ENCODE measurements at regions of chr4 and their contacts with region 1.

Region 1: DNA sequence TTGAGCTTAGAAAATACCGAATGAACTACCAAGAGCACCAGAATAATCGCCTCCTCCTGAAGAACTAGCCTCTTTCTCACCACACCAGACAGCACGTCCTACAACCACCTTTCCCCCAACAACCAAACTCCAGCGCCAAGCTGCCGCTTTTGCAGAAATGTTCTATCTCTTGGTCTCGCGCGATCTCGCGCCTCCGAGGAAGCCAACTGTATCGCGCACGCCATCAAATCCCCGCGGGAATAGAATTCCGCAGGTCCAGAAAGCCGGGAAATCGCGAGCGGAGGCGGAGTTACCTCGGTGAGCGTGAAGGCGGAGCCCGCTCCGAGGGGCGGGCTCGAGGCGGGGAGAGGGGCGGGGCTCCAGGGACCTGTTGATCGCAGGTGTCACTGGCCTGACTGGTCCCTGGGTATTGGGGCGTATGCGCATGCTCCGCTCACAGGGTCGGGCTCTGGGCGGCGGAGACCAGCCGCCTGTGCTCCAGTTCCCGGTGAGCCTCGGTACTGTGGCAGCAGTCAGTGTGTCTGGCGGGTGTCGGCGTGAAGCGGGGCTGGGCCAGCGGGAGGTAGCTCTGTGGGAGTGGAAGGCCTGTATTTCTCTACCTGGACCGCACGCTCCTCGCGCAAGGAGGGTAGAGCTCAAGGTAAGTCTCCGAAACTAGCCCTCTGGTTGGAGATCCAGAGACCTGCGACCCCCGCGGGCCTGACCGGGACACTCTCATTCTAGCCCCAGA is at the start of gene USP53:
- DNase-seq: peak; percentile 97
- ATAC-seq: peak; percentile 97
- total RNA-seq, gene USP53: 32.8 TPM

Region 2: GRCh38 chr4:119099227-119099801 is 113.1 kb before region 1 on chr4:
- intact Hi-C with region 1: loop called (anchors 5 kb)
- DNase-seq: no peak
- ATAC-seq: peak; percentile 43

Region 3: GRCh38 chr4:119179011-119179410 is 33.4 kb before region 1 on chr4:
- intact Hi-C with region 1: loop called (anchors 5 kb)
- DNase-seq: no peak
- ATAC-seq: peak; percentile 46

Region 4: DNA sequence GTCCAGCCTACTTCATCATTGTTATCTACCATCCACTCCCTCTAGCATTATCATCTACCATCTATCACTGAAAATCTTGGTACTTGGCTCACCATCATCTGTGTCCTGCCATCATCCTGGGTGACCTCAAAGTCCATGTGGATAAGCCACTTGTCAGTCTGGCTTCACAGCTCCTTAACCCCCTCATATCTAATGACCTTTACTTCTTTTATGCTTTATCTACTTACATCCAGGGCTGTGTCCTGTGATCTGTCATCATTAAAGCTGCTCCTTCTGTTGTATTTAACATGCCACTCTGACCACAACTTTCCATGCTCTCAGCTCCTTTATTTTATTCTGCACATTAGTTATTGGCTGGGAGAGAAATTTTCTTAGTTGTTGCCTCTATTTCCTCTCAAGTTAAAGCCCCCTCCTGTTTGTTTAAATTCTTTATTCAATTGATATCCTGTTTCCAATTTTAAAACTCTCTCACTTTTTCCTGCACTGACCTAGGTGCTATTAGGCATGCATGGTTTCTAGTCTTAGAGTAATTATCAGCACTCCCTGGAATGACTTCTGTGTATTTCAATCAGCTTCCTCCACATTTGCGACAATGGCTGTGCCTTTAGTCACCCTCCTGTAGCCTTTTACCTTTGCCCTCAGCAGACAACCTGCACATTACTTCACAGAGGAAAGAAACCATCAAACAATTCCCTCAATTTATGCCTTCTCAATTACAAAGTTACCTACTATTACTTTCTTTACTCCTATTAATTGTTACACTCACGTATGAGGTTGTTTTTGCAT is 117.6 kb after region 1 on chr4:
- intact Hi-C with region 1: no loop called
- DNase-seq: no peak
- ATAC-seq: peak; percentile 56

Measured in Right ventricle myocardium inferior (tissue), 1 donor.